Endothelial cell of umbilical vein (primary cell): ENCODE measurements at regions of chr4 and their contacts with region 1.

Region 1: GRCh38 chr4:108620101-108620932 is at the start of gene RPL34:
- DNase-seq: peak; percentile 99
- H3K4me3 ChIP-seq: peak within 1 kb of the TSS; percentile 49 to 95 (median 74)
- H3K27ac ChIP-seq: peak within 1 kb of the TSS; percentile 81
- H3K4me1 ChIP-seq: peaks cover 23% of the 10 kb centered on the region
- H3K27me3 ChIP-seq: no peaks in the 10 kb centered on the region
- CTCF ChIP-seq: no peak
- POLR2A ChIP-seq: peak; percentile 97
- total RNA-seq, gene RPL34: 1,114 and 1,139 TPM in 2 replicates

Region 2: DNA sequence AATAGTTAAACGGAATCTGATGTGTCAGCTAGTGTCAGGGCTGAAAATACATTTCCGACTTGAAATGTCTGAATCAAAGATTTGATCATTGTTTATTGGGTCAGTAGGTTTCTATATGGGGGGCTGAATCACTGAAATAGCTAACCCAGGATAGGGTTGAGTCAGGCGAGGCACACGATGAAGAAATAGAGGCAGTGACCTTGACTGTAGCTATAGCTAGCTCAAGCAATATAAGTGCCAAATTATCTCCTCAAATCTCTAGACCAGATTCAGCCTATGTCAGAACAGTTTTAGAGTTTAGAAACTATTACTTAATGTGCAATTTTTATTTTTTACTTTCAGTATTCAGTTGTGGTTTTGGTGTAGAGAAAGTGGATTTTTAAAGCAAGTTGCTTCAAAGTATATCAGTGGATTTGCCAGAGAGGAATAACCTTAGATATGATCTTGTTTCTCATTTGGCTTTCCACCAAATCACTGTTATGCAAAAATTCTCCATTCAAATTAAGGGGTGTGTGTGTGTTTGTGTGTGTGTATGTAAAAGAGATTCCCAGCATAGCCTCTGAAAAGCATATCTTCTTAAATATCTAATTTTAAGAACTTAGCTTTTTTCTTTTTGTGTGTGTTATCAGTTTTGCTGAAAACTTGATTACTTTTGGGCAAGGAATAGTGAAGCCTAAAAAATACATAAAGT is 100.3 kb before region 1 on chr4:
- CTCF ChIA-PET with region 1: no interaction called
- POLR2A ChIA-PET with region 1: no interaction called
- dilution Hi-C with region 1: no loop called
- intact Hi-C with region 1: no loop called
- DNase-seq: no peak
- H3K4me3 ChIP-seq: no peak overlapping the region
- H3K27ac ChIP-seq: no peak overlapping the region
- H3K4me1 ChIP-seq: no peaks in the 10 kb centered on the region
- H3K27me3 ChIP-seq: no peaks in the 10 kb centered on the region
- CTCF ChIP-seq: no peak
- POLR2A ChIP-seq: no peak

Region 3: GRCh38 chr4:108592674-108592986 is 27.7 kb before region 1 on chr4:
- CTCF ChIA-PET with region 1: interaction called, 3 read pairs
- POLR2A ChIA-PET with region 1: interaction called, 3 read pairs
- dilution Hi-C with region 1: no loop called
- intact Hi-C with region 1: loop called (anchors 1 kb)
- DNase-seq: peak; percentile 24
- H3K4me3 ChIP-seq: no peak overlapping the region
- H3K27ac ChIP-seq: peak overlapping the region; percentile 93
- H3K4me1 ChIP-seq: peaks cover 18% of the 10 kb centered on the region
- H3K27me3 ChIP-seq: no peaks in the 10 kb centered on the region
- CTCF ChIP-seq: no peak
- POLR2A ChIP-seq: no peak